ENCODE measurements at regions of chr16 and their contacts with region 1.

Region 1: GRCh38 chr16:24041826-24042631 is 206.2 kb downstream of the PRKCB start:
- DNase-seq: peak; percentile 73
- H3K27ac ChIP-seq: no peak overlapping the region
- CTCF ChIP-seq: peak; percentile 67

Region 2: DNA sequence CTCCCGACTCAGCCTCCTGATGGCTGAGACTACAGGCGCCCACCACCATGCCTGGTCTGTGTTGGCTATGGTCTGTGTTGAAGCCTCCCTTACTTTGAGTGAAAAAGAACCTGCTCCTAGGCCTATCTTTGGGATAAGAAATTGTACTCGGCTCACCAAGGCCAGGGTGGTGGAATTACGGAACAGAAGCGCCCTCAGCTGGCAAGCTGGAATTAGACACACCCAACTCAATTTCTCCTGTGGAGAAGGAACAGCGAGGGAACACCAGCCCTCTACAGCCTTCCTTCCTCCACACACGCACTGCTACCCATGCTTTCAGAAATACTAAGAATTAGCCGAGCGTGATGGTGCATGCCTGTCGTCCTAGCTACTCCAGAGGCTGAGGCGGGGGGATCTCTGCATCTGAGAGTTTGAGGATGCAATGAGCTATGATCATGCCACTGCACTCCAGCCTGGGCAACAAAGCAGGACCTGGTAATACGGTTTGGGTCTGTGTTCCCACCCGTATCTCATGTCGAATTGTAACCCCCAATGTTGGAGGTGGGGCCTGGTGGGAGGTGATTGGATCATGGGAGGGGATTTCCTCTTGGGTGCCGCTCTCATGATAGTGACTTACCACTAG is 457.3 kb after region 1 on chr16:
- CTCF ChIA-PET with region 1: interaction called, 25 read pairs
- POLR2A ChIA-PET with region 1: no interaction called
- DNase-seq: peak; percentile 62
- H3K27ac ChIP-seq: no peak overlapping the region
- CTCF ChIP-seq: no peak; the same call in 1 of the 2 replicates